Activated naive CD4-positive, alpha-beta T cell treated with anti-CD3 and anti-CD28 coated beads for 36 hours (primary cell): ENCODE measurements at regions of chr6 and their contacts with region 1.

Region 1: GRCh38 chr6:52162940-52163908 is 23.0 kb upstream of the IL17A start:
- DNase-seq: peak; percentile 30
- H3K4me3 Mint-ChIP-seq: no peak overlapping the region
- H3K27ac Mint-ChIP-seq: peak overlapping the region; percentile 55
- H3K4me1 Mint-ChIP-seq: peaks cover 34% of the 10 kb centered on the region
- H3K27me3 Mint-ChIP-seq: peaks cover 18% of the 10 kb centered on the region

Region 2: GRCh38 chr6:52087498-52087999 is 75.7 kb before region 1 on chr6 and contains the start of gene PKHD1:
- CTCF ChIA-PET with region 1: no interaction called
- intact Hi-C with region 1: loop called (anchors 2 kb)
- DNase-seq: no peak
- H3K4me3 Mint-ChIP-seq: no peak within 1 kb of the TSS
- H3K27ac Mint-ChIP-seq: no peak within 1 kb of the TSS
- H3K4me1 Mint-ChIP-seq: no peaks in the 10 kb centered on the region
- H3K27me3 Mint-ChIP-seq: peaks cover 2% of the 10 kb centered on the region
- total RNA-seq, gene PKHD1: not detected

Region 3: GRCh38 chr6:52233975-52234823 is 71.0 kb after region 1 on chr6:
- CTCF ChIA-PET with region 1: interaction called, 52 read pairs
- intact Hi-C with region 1: loop called (anchors 1 kb)
- DNase-seq: peak; percentile 62
- H3K4me3 Mint-ChIP-seq: no peak overlapping the region
- H3K27ac Mint-ChIP-seq: no peak overlapping the region
- H3K4me1 Mint-ChIP-seq: peaks cover 6% of the 10 kb centered on the region
- H3K27me3 Mint-ChIP-seq: peaks cover 23% of the 10 kb centered on the region

Region 4: DNA sequence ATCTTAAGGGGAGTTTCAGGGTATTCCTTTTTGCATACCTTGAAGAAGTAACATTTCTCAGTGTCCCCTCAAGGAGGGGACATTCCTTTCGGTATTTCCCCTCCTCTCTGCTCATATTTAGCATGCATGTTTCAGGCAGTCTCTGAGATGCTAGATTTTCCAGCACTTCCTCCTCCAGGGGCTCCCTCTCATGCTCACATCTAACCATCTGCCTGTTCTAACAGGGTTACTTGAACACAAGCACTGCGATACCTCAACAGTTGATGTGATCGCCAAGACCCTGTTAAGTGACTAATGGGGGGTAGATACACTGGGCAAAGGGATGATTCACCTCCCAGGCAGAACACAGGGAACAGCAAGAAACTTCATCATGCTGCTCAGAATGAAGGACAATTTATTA is 134.2 kb after region 1 on chr6:
- CTCF ChIA-PET with region 1: no interaction called
- intact Hi-C with region 1: loop called (anchors 1 kb)
- DNase-seq: peak; percentile 51
- H3K4me3 Mint-ChIP-seq: no peak overlapping the region
- H3K27ac Mint-ChIP-seq: peak overlapping the region; percentile 60
- H3K4me1 Mint-ChIP-seq: peaks cover 35% of the 10 kb centered on the region
- H3K27me3 Mint-ChIP-seq: no peaks in the 10 kb centered on the region

Region 5: GRCh38 chr6:52419809-52420670 is 256.8 kb after region 1 on chr6 and contains the start of gene EFHC1:
- CTCF ChIA-PET with region 1: interaction called, 3 read pairs
- intact Hi-C with region 1: loop called (anchors 1 kb)
- DNase-seq: peak; percentile 99
- H3K4me3 Mint-ChIP-seq: no peak within 1 kb of the TSS
- H3K27ac Mint-ChIP-seq: peak within 1 kb of the TSS; percentile 88
- H3K4me1 Mint-ChIP-seq: peaks cover 22% of the 10 kb centered on the region
- H3K27me3 Mint-ChIP-seq: no peaks in the 10 kb centered on the region
- total RNA-seq, gene EFHC1: 1.2 to 3.1 TPM

Region 6: GRCh38 chr6:52984247-52984646 is 821.0 kb after region 1 on chr6:
- CTCF ChIA-PET with region 1: no interaction called
- intact Hi-C with region 1: loop called (anchors 2 kb)
- DNase-seq: peak; percentile 81
- H3K4me3 Mint-ChIP-seq: no peak overlapping the region
- H3K27ac Mint-ChIP-seq: peak overlapping the region; percentile 82
- H3K4me1 Mint-ChIP-seq: peaks cover 63% of the 10 kb centered on the region
- H3K27me3 Mint-ChIP-seq: peaks cover 8% of the 10 kb centered on the region

Region 7: GRCh38 chr6:53426667-53427270 is 1263.5 kb after region 1 on chr6:
- CTCF ChIA-PET with region 1: no interaction called
- intact Hi-C with region 1: loop called (anchors 1 kb)
- DNase-seq: no peak
- H3K4me3 Mint-ChIP-seq: no peak overlapping the region
- H3K27ac Mint-ChIP-seq: no peak overlapping the region
- H3K4me1 Mint-ChIP-seq: peaks cover 34% of the 10 kb centered on the region
- H3K27me3 Mint-ChIP-seq: peaks cover 14% of the 10 kb centered on the region